Kidney (tissue), 22 donors: ENCODE measurements at regions of chr11 and their contacts with region 1.

Region 1: GRCh38 chr11:61384271-61385242 is 7.8 kb upstream of the TMEM216 start:
- DNase-seq: peak in 1 of 5 donors; percentile 23
- H3K4me3 ChIP-seq: no peak overlapping the region
- H3K27ac ChIP-seq: no peak overlapping the region
- H3K4me1 ChIP-seq: peaks cover 0 to 4% (median 0%) of the 10 kb centered on the region in 3 donors
- H3K27me3 ChIP-seq: no peaks in the 10 kb centered on the region
- CTCF ChIP-seq: peak; percentile 29

Region 2: GRCh38 chr11:61336171-61336922 is 48.2 kb before region 1 on chr11:
- intact Hi-C with region 1: loop called (anchors 5 kb)
- DNase-seq: peak; percentile 88 to 92 (median 90)
- H3K4me3 ChIP-seq: no peak overlapping the region
- H3K27ac ChIP-seq: peak overlapping the region; percentile 65 to 67
- H3K4me1 ChIP-seq: peaks cover 4 to 28% (median 11%) of the 10 kb centered on the region in 3 donors
- H3K27me3 ChIP-seq: no peaks in the 10 kb centered on the region
- CTCF ChIP-seq: peak; percentile 96